ENCODE measurements at regions of chr6 and their contacts with region 1.

Region 1: GRCh38 chr6:116373940-116374339 is 3.2 kb downstream of the DSE start:
- DNase-seq: no peak
- H3K4me3 ChIP-seq: no peak overlapping the region
- H3K27ac ChIP-seq: no peak overlapping the region
- H3K4me1 ChIP-seq: peaks cover 18% of the 10 kb centered on the region
- H3K27me3 ChIP-seq: no peaks in the 10 kb centered on the region
- CTCF ChIP-seq: no peak

Region 2: DNA sequence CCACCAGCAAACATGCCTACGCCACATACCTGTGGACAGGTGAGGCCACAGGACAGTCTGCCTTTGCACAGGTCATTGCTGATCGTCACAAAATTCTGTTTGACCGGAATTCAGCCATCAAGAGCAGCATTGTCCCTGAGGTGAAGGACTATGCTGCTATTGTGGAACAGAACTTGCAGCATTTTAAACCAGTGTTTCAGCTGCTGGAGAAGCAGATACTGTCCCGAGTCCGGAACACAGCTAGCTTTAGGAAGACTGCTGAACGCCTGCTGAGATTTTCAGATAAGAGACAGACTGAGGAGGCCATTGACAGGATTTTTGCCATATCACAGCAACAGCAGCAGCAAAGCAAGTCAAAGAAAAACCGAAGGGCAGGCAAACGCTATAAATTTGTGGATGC is 62.6 kb after region 1 on chr6:
- CTCF ChIA-PET with region 1: no interaction called
- POLR2A ChIA-PET with region 1: no interaction called
- intact Hi-C with region 1: loop called (anchors 2 kb)
- DNase-seq: no peak
- H3K4me3 ChIP-seq: no peak overlapping the region
- H3K27ac ChIP-seq: no peak overlapping the region
- H3K4me1 ChIP-seq: peaks cover 19% of the 10 kb centered on the region
- H3K27me3 ChIP-seq: no peaks in the 10 kb centered on the region
- CTCF ChIP-seq: no peak

Region 3: DNA sequence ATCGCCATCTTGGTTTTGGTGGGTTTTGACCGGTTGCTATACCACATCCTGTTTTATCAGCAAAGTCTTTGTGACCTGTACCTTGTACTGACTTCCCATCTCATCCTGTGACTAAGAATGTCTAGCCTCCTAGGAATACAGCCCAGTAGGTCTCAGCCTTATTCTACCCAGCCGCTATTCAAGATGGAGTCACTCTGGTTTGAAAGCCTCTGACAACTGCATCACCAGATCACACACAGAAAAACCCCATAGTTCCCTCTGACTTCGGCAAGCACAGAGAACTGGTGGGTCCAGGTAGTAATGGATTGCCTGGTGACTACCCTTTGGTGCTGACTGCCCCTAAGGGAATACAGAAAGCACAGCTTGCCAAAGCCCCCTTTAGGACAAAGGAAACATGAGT is 232.0 kb after region 1 on chr6:
- CTCF ChIA-PET with region 1: no interaction called
- POLR2A ChIA-PET with region 1: no interaction called
- intact Hi-C with region 1: no loop called
- DNase-seq: no peak
- H3K4me3 ChIP-seq: no peak overlapping the region
- H3K27ac ChIP-seq: no peak overlapping the region
- H3K4me1 ChIP-seq: no peaks in the 10 kb centered on the region
- H3K27me3 ChIP-seq: peaks cover 2% of the 10 kb centered on the region
- CTCF ChIP-seq: no peak

Measured in A673 (cell line).